ENCODE measurements at regions of chr12 and their contacts with region 1.

Region 1: DNA sequence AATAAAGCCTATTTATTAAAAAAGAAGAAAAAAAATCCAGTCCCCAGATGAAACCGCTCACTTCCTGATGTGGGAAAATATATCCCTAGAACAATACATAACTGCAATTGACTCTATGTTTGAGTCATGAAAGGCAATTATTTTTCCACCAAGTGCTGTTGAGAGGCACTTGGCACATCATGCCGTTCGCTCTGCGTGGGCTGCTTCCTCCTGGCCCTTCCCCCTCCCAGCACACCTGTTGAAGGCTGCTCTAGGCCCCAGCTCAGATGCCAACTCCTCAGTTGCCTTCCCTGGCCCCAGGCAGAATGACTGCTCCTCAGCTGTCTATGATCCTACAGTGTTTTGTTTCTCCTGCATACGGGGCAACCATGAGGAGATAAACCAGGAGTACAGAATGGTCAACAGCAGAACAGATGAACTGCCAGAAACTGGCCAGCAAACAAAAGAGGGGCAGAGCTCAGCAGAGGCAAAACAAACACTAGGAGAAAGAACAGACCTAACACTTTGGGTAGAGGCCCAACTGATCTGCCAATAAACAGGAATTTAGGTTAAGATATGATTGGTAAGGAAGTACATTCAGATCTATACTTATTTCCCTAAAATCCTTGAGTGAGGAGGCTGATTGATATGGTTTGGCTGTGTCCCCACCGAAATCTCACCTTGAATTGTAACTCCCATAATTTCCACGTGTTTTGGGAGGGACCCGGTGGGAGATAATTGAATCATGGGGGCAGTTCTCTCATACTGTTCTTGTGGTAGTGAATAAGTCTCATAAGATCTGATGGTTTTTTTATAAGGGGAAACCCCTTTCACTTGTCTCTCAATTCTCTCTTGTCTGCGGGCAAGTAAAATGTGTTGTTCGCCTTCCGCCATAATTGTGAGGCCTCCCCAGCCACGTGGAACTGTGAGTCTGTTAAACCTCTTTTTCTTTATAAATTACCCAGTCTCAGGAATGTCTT is 58.6 kb downstream of the SLC38A1 start:
- DNase-seq: peak; percentile 41
- H3K4me3 ChIP-seq: no peak overlapping the region
- H3K27ac ChIP-seq: peak overlapping the region; percentile 72
- H3K4me1 ChIP-seq: peaks cover 87% of the 10 kb centered on the region
- H3K27me3 ChIP-seq: no peaks in the 10 kb centered on the region
- CTCF ChIP-seq: no peak

Region 2: DNA sequence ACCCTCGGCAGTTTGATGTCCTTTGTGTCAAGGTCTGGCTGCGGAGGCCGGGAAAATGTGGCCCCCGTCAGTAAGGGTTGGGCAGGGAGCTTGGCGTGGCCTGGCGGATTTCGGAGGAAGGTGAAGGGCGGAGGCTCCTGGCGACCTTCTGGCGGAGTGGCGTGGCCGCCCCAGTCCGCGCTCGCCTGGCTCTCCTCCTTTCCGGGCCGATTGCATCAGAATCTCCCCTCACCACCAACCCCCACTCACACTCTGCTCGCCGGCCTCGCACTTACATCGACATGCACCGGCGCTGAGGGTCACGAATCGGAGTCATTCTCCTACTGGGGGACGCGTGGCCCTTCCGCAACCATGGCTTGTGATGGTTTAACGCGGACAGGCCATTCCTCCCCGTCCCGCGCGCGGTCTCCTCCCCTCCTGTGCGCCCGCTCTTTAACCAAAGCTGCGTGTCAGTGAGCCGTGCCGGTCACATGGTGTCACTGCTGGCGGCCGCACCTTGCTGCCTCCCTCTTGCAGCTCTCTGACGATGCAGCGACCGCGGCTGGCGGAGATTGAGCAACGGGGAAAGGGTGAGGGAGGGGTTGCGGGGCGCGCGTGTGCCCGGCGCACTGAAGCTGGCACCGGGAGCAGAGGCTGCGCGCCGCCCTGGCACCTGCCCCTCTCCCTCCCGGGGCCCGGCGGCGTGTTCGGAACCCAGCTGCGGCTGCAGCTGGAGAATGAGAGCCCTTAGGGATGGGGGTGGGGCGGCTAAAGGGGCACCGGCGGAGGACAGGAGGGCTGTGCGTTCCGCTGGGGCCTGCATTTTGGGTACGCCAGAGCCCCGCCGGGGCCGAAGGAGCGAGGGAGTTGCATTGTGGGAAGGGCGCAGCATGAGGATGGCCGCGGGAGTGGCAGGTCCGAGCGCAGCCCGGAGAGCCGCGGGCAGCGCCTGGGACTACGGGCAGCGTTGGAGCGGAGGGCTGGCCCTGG is 58.7 kb after region 1 on chr12 and contains the start of gene SLC38A1:
- intact Hi-C with region 1: loop called (anchors 10 kb)
- DNase-seq: peak; percentile 86
- H3K4me3 ChIP-seq: peak within 1 kb of the TSS; percentile 77
- H3K27ac ChIP-seq: peak within 1 kb of the TSS; percentile 86
- H3K4me1 ChIP-seq: peaks cover 57% of the 10 kb centered on the region
- H3K27me3 ChIP-seq: peaks cover 37% of the 10 kb centered on the region
- CTCF ChIP-seq: no peak
- total RNA-seq, gene SLC38A1: 134 TPM

Region 3: DNA sequence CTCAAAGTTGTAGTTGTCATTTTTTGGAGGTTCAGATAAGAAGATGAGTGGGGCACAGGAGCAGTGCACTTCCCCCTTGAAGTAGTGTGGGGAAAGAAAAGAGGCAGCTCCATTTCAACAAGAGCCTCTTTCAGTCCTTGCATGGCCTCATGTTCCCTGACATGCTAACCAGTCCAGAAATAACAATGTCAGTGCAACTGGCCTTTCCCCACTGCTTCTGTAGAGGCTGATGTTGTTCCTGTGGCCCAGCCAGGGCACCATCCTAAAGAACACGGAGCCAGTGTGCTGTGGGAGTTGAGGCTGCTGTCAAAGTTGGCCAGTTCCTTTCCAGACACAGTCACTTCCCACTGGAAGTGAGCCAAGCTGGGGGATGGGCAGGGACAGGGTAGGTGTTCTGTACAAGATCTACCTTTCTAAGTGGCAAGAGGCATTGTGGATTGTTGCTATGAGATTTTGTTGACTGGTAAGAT is 240.1 kb after region 1 on chr12:
- intact Hi-C with region 1: no loop called
- DNase-seq: peak; percentile 77
- H3K4me3 ChIP-seq: no peak overlapping the region
- H3K27ac ChIP-seq: peak overlapping the region; percentile 64
- H3K4me1 ChIP-seq: peaks cover 41% of the 10 kb centered on the region
- H3K27me3 ChIP-seq: no peaks in the 10 kb centered on the region
- CTCF ChIP-seq: no peak